ENCODE measurements at regions of chr3 and their contacts with region 1.

Region 1: GRCh38 chr3:46976326-46977190 is at the start of gene CCDC12:
- DNase-seq: peak; percentile 95
- ATAC-seq: peak; percentile 91
- total RNA-seq, gene CCDC12: 29.2 TPM

Region 2: GRCh38 chr3:46866720-46867549 is 109.6 kb before region 1 on chr3:
- intact Hi-C with region 1: no loop called
- DNase-seq: peak; percentile 94
- ATAC-seq: peak; percentile 48

Region 3: DNA sequence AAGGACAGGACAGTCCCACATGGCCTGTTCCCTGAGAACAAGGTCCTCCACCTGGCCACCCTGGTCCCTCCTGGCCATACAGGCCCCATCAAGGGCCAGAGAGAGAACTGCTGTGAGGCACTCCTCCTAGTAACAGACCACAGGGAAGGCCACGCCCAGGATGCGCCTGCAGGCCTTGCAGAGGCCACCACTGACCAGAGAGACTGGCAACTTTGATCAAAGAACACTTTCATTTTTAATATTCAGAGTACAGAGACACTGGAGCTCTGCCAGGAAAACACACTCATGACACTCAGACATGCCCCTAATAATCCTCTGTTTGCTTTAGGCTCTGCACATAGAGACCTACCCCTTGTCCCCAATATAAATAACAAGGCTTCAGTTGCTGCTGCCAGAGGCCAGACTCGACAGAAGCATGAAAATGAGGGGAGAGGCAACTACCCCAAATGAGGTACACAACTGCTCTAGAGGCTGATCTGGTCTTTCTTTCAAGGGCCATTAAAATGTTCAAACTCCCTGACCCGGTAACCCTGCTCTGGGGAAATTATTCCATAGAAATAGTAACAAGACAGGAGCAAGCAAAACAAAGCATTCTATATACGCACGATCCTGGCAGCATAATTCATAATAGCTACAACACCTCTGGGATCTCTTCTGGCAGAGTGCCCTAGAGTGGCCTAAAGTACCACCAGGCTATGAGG is 44.8 kb before region 1 on chr3:
- intact Hi-C with region 1: loop called (anchors 5 kb)
- DNase-seq: peak; percentile 86
- ATAC-seq: no peak

Region 4: DNA sequence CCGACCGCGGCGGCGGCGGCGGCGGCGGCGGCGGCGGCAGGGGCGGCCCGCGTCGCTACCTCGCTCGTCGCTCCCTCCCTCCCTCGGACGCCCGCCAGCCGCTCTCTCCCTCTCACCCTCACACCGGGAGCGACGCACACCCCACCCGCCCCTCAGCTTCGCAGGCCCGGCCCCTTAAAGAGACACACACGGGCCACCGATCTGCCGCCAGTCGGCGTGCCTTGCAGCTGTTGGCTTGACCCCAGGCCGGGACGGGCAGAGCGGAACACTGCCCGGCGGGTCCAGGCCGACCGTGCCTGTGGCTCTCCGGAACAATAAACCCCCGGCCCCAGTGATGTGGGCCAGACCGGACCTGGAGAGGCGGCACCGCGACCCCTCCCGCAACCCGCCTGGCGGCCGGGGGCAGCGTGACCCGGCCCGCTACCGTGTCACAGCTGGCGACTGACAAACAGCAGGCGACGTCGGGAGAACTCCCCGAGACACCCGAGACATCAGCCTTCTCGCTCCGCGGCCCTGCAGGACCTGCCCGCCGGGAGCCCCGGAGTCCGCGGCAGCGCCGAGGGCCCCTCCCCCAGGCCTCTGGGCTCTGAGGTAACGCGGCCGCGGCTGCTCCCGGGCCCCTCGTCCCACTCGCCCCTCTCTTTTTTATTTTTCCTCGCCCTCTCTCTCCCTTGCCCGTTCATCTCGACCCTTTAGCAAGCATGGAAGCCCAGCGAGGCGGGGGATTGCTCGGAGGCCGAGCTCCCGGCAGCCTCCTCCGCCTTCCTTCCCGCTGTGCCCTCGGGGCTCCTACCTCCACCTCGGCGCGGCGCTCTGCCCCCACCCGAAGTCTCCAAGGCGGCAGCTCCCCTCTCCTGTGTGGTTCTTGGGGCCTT is 187.7 kb after region 1 on chr3 and contains the start of gene SETD2:
- intact Hi-C with region 1: loop called (anchors 5 kb)
- DNase-seq: peak; percentile 97
- ATAC-seq: peak; percentile 97
- total RNA-seq, gene SETD2: 23.8 TPM

Measured in Right ventricle myocardium superior (tissue), 1 donor.